Activated CD8-positive, alpha-beta memory T cell treated with anti-CD3 and anti-CD28 coated beads, Interleukin-2, amount 10 ng/mL, durations not matched to agents 7 days and 5 days (primary cell): ENCODE measurements at regions of chr6 and their contacts with region 1.

Region 1: DNA sequence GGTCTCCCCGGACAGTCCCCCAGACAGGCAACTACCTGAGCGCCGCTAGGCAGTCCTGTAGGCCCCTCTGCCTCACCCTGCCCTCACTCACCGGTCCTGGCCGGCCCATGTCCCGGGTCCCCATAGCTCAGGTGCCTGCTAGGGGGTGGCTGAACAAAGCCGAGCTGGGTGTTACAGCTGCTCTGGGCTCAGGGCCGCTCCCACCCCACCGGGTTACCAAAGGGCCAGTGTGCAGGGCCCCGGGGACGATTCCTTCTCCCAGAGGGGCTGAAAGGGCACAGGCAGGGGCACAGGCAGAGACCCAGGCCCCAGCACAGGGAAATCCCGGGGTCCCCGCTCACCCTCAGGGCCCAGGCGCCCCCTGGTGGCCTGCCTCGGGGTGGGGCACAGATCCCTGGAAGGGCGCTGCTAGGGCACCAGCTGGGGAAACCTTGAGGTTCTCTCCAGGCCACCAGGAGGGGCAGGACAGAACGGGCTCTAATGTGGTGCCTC is 118.4 kb downstream of the GRM4 start:
- DNase-seq: peak; percentile 74
- ATAC-seq: peak; percentile 69
- H3K4me3 Mint-ChIP-seq: no peak overlapping the region
- H3K27ac Mint-ChIP-seq: no peak overlapping the region
- H3K4me1 Mint-ChIP-seq: peaks cover 4% of the 10 kb centered on the region
- H3K27me3 Mint-ChIP-seq: peaks cover 4% of the 10 kb centered on the region

Region 2: DNA sequence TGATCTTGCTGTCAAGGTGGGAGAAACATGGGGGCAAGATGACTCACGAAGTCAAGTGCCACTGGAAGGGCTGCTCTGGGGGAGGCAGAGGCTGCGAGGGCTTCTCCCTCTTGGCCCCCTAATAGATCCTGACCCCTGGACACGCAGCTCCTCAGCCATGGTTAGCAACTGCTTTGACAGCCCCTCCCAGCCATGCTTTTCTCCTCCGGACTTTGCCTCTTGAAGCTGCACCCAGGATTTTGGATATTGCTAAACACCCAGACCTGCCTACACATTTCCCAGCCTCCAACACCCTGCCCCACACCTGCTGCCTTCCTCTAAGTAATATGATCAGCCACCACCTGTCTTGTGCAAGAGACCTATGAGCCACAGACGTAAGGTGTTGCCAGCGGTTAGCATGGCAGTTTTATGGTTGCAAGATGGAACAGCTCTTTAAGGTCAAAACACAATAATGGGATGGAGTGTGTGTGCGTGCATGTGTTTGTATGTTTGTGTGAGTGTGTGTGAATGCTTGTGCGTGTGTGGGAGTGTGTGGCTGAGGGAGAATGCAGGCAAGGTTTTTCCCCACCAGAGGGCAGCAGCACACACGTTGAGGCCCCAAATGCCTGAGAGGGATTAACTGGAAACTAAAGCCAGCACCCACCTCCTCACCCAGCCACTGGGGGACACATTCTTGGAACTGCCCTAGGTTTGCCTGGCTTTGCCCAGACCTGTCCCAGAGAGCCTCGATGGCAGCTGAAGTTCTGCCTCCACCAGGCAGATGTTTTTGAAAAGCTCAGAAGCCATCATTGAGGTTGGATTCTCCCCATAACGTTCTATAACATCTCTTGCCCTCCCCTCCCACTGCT is 283.3 kb before region 1 on chr6:
- CTCF ChIA-PET with region 1: interaction called, 13 read pairs
- DNase-seq: peak; percentile 80
- ATAC-seq: peak; percentile 78
- H3K4me3 Mint-ChIP-seq: no peak overlapping the region
- H3K27ac Mint-ChIP-seq: no peak overlapping the region
- H3K4me1 Mint-ChIP-seq: no peaks in the 10 kb centered on the region
- H3K27me3 Mint-ChIP-seq: peaks cover 18% of the 10 kb centered on the region

Region 3: DNA sequence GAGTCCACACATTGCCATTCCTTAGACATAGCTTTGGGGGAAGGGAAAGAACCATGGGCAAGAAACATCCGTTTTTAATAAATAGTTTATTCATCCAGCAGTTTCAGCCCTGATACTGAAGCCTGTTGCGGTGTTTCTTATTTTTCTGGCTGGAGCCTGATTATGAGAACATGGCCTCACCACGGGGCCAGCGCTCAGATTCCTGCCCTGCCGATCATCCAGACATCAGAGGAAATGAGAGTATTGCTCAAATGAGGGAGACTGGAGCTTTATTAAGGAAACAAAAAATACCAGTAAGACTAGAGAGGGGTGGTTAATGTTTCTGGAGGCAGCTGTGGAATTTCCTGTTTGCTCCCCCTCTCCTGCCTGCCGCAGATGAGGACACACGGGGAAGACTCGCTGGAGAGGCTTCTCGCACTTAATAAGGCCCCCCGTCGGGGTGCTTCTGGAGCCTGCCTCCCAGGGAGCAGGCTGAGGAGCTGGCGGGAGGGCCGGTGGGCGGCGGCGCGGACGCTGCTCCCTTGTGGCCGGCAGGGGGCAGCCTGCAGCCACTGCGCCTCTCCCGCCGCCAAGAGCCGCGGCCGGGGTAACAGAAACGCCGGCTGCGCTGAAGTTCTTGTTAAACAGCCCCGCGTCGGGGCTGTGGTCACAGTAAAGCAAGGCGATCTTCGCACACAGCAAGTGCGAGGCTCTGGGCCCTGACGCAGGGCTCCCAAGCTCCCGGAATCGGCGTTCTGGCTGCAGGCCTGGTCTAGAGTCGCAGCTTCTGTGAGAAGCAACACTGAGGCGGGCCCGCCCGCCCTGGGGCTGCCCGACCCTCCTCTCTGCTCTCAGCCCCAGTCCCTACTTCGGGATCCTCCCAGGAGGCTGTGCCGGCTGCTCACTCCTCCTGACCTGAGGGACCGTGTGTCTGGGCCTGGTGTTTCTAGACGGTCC is 256.1 kb before region 1 on chr6:
- CTCF ChIA-PET with region 1: interaction called, 192 read pairs
- DNase-seq: peak; percentile 73
- ATAC-seq: peak; percentile 81
- H3K4me3 Mint-ChIP-seq: no peak overlapping the region
- H3K27ac Mint-ChIP-seq: no peak overlapping the region
- H3K4me1 Mint-ChIP-seq: peaks cover 12% of the 10 kb centered on the region
- H3K27me3 Mint-ChIP-seq: peaks cover 10% of the 10 kb centered on the region

Region 4: DNA sequence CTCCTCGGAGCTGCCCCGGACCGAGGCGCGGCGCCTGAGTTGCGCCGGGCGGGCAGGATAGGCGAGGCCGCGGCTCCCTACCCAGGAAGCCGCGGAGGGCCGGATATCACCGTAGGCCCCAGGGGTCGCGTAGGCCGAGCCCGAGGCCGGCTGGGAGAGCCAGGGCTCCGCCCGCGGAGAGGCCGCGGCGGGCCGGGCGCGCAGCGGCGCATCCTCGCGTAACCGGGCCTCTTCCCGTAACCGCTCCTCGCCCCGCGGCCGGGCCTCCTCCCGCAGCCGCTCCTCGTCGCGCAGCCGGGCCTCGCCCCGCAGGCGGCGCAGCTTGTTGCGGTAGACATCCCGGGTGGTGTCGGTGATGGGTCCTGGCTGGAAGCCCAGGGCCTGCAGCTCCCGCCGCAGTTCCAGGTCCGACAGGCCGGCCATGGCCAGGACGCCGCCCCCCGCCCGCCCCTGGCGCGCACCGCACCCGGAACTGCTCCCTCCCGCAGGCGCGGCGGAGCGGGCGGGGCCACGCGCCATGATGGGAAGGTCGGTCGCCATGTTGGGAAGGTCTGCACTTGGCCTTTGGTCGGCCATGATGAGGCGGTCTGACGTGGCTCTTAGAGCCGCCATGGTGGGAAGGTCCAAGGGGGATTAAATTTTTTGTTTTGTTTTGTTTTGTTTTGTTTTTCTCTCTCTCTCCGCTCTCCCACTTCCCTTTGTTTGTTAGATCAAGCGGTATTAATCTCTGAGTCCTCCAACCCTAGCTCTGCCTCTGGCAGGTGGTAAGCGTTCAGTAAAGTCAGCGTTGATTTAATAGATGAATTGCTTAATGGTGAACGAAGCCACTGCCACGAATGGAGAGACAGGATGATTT is 238.6 kb before region 1 on chr6 and contains the start of gene LEMD2:
- CTCF ChIA-PET with region 1: interaction called, 12 read pairs
- DNase-seq: peak; percentile 94
- ATAC-seq: peak; percentile 88
- H3K4me3 Mint-ChIP-seq: peak within 1 kb of the TSS; percentile 89
- H3K27ac Mint-ChIP-seq: peak within 1 kb of the TSS; percentile 90
- H3K4me1 Mint-ChIP-seq: peaks cover 45% of the 10 kb centered on the region
- H3K27me3 Mint-ChIP-seq: peaks cover 8% of the 10 kb centered on the region
- total RNA-seq, gene LEMD2: 64.9 to 80.3 TPM

Region 5: GRCh38 chr6:33807606-33808005 is 219.9 kb before region 1 on chr6:
- CTCF ChIA-PET with region 1: interaction called, 10 read pairs
- DNase-seq: no peak
- ATAC-seq: no peak
- H3K4me3 Mint-ChIP-seq: no peak overlapping the region
- H3K27ac Mint-ChIP-seq: no peak overlapping the region
- H3K4me1 Mint-ChIP-seq: peaks cover 24% of the 10 kb centered on the region
- H3K27me3 Mint-ChIP-seq: peaks cover 51% of the 10 kb centered on the region

Region 6: GRCh38 chr6:33851959-33852358 is 175.5 kb before region 1 on chr6:
- CTCF ChIA-PET with region 1: interaction called, 95 read pairs
- DNase-seq: peak; percentile 53
- ATAC-seq: no peak
- H3K4me3 Mint-ChIP-seq: no peak overlapping the region
- H3K27ac Mint-ChIP-seq: no peak overlapping the region
- H3K4me1 Mint-ChIP-seq: peaks cover 17% of the 10 kb centered on the region
- H3K27me3 Mint-ChIP-seq: peaks cover 46% of the 10 kb centered on the region

Region 7: GRCh38 chr6:33860706-33861474 is 166.6 kb before region 1 on chr6:
- CTCF ChIA-PET with region 1: interaction called, 95 read pairs
- DNase-seq: peak; percentile 88
- ATAC-seq: peak; percentile 71
- H3K4me3 Mint-ChIP-seq: peak overlapping the region; percentile 19
- H3K27ac Mint-ChIP-seq: peak overlapping the region; percentile 82
- H3K4me1 Mint-ChIP-seq: peaks cover 83% of the 10 kb centered on the region
- H3K27me3 Mint-ChIP-seq: peaks cover 4% of the 10 kb centered on the region

Region 8: GRCh38 chr6:34084591-34085290 is 57.2 kb after region 1 on chr6:
- CTCF ChIA-PET with region 1: no interaction called
- DNase-seq: no peak
- ATAC-seq: no peak
- H3K4me3 Mint-ChIP-seq: no peak overlapping the region
- H3K27ac Mint-ChIP-seq: no peak overlapping the region
- H3K4me1 Mint-ChIP-seq: peaks cover 4% of the 10 kb centered on the region
- H3K27me3 Mint-ChIP-seq: no peaks in the 10 kb centered on the region